CD4-positive, alpha-beta T cell (primary cell): ENCODE measurements at regions of chr1 and their contacts with region 1.

Region 1: GRCh38 chr1:111030590-111030989 is 66.9 kb upstream of the LRIF1 start:
- DNase-seq: peak in 13 of 14 experiments; percentile 7 to 79 (median 29)
- ATAC-seq: no peak
- H3K4me3 ChIP-seq: no peak overlapping the region
- H3K4me3 Mint-ChIP-seq: no peak overlapping the region
- H3K27ac ChIP-seq: no peak overlapping the region
- H3K27ac Mint-ChIP-seq: no peak overlapping the region
- H3K4me1 ChIP-seq: no peaks in the 10 kb centered on the region
- H3K4me1 Mint-ChIP-seq: peaks cover 5% of the 10 kb centered on the region
- H3K27me3 ChIP-seq: no peaks in the 10 kb centered on the region
- H3K27me3 Mint-ChIP-seq: peaks cover 17% of the 10 kb centered on the region
- CTCF ChIP-seq: peak; percentile 96

Region 2: GRCh38 chr1:111334169-111334568 is 303.6 kb after region 1 on chr1:
- CTCF ChIA-PET with region 1: interaction called, 8 read pairs
- POLR2A ChIA-PET with region 1: no interaction called
- intact Hi-C with region 1: loop called (anchors 1 kb)
- DNase-seq: peak; percentile 37 to 85 (median 52)
- ATAC-seq: peak; percentile 95
- H3K4me3 ChIP-seq: no peak overlapping the region
- H3K4me3 Mint-ChIP-seq: no peak overlapping the region
- H3K27ac ChIP-seq: no peak overlapping the region
- H3K27ac Mint-ChIP-seq: no peak overlapping the region
- H3K4me1 ChIP-seq: peaks cover 8% of the 10 kb centered on the region
- H3K4me1 Mint-ChIP-seq: peaks cover 6% of the 10 kb centered on the region
- H3K27me3 ChIP-seq: no peaks in the 10 kb centered on the region
- H3K27me3 Mint-ChIP-seq: no peaks in the 10 kb centered on the region
- CTCF ChIP-seq: peak; percentile 81

Region 3: GRCh38 chr1:111399792-111400610 is 369.4 kb after region 1 on chr1:
- CTCF ChIA-PET with region 1: no interaction called
- POLR2A ChIA-PET with region 1: no interaction called
- intact Hi-C with region 1: loop called in 1 of 2 experiments (anchors 2 kb)
- DNase-seq: peak in 12 of 14 experiments; percentile 7 to 69 (median 24)
- ATAC-seq: no peak
- H3K4me3 ChIP-seq: no peak overlapping the region
- H3K4me3 Mint-ChIP-seq: no peak overlapping the region
- H3K27ac ChIP-seq: no peak overlapping the region
- H3K27ac Mint-ChIP-seq: no peak overlapping the region
- H3K4me1 ChIP-seq: no peaks in the 10 kb centered on the region
- H3K4me1 Mint-ChIP-seq: peaks cover 40% of the 10 kb centered on the region
- H3K27me3 ChIP-seq: no peaks in the 10 kb centered on the region
- H3K27me3 Mint-ChIP-seq: no peaks in the 10 kb centered on the region
- CTCF ChIP-seq: peak; percentile 84

Region 4: GRCh38 chr1:111441573-111442192 is 411.1 kb after region 1 on chr1:
- CTCF ChIA-PET with region 1: no interaction called
- POLR2A ChIA-PET with region 1: no interaction called
- intact Hi-C with region 1: loop called in 1 of 2 experiments (anchors 2 kb)
- DNase-seq: peak; percentile 58 to 83 (median 70)
- ATAC-seq: peak; percentile 98
- H3K4me3 ChIP-seq: no peak overlapping the region
- H3K4me3 Mint-ChIP-seq: no peak overlapping the region
- H3K27ac ChIP-seq: no peak overlapping the region
- H3K27ac Mint-ChIP-seq: peak overlapping the region; percentile 84
- H3K4me1 ChIP-seq: peaks cover 14% of the 10 kb centered on the region
- H3K4me1 Mint-ChIP-seq: peaks cover 54% of the 10 kb centered on the region
- H3K27me3 ChIP-seq: no peaks in the 10 kb centered on the region
- H3K27me3 Mint-ChIP-seq: no peaks in the 10 kb centered on the region
- CTCF ChIP-seq: peak; percentile 80